Activated B cell treated with CpG ODN at 0.5 μM for 24 hours (primary cell): ENCODE measurements at regions of chr17 and their contacts with region 1.

Region 1: GRCh38 chr17:40559954-40560591 is 5.2 kb downstream of the CCR7 start:
- DNase-seq: peak; percentile 71
- ATAC-seq: peak; percentile 25
- H3K4me3 Mint-ChIP-seq: peak overlapping the region; percentile 89
- H3K27ac Mint-ChIP-seq: peak overlapping the region; percentile 99
- H3K4me1 Mint-ChIP-seq: peaks cover 81% of the 10 kb centered on the region
- H3K27me3 Mint-ChIP-seq: no peaks in the 10 kb centered on the region
- CTCF ChIP-seq: peak; percentile 74

Region 2: DNA sequence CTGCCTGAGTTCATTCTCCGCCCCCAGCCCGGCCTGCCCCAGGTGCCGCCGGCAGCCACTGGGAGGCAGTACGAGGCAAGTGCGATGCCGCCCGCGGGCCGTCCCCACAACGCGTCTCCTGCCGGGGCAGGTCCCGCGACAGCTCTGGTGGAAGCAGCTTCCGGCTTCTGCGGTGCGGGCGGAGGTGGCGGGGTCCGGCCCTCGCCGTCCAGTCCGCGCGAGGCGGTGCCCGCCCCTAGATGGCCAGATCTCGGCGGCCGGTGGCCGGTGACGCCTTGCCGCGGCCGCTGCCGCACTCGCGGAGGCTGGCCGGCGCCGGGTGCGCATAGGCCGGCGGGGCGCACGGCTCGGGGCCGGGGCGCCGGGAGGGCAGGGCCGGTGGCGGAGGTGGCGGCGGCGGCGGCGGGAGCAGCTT is 197.4 kb before region 1 on chr17:
- CTCF ChIA-PET with region 1: interaction called, 4 read pairs
- POLR2A ChIA-PET with region 1: interaction called, 5 read pairs
- intact Hi-C with region 1: loop called (anchors 1 kb)
- DNase-seq: peak; percentile 73
- ATAC-seq: peak; percentile 85
- H3K4me3 Mint-ChIP-seq: peak overlapping the region; percentile 58
- H3K27ac Mint-ChIP-seq: peak overlapping the region; percentile 67
- H3K4me1 Mint-ChIP-seq: peaks cover 17% of the 10 kb centered on the region
- H3K27me3 Mint-ChIP-seq: peaks cover 14% of the 10 kb centered on the region
- CTCF ChIP-seq: no peak

Region 3: DNA sequence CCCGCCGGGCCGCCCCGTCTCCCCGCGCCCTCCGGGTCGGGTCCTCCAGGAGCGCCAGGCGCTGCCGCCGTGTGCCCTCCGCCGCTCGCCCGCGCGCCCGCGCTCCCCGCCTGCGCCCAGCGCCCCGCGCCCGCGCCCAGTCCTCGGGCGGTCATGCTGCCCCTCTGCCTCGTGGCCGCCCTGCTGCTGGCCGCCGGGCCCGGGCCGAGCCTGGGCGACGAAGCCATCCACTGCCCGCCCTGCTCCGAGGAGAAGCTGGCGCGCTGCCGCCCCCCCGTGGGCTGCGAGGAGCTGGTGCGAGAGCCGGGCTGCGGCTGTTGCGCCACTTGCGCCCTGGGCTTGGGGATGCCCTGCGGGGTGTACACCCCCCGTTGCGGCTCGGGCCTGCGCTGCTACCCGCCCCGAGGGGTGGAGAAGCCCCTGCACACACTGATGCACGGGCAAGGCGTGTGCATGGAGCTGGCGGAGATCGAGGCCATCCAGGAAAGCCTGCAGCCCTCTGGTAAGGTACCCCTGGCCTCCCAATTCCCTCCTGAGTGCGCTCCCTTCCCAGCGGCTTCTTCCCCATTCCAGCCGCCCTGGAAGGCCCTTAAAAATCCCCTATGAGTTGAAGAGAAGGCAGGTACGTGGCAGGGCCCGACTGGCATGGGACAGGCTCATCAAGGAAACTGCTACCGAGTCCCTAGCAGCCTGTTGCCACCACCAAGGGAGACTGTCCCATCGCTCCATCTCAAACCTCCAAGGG is 116.3 kb before region 1 on chr17:
- CTCF ChIA-PET with region 1: interaction called, 8 read pairs
- POLR2A ChIA-PET with region 1: interaction called, 58 read pairs
- intact Hi-C with region 1: loop called (anchors 1 kb)
- DNase-seq: peak; percentile 72
- ATAC-seq: peak; percentile 83
- H3K4me3 Mint-ChIP-seq: peak overlapping the region; percentile 81
- H3K27ac Mint-ChIP-seq: peak overlapping the region; percentile 79
- H3K4me1 Mint-ChIP-seq: peaks cover 37% of the 10 kb centered on the region
- H3K27me3 Mint-ChIP-seq: no peaks in the 10 kb centered on the region
- CTCF ChIP-seq: no peak

Region 4: DNA sequence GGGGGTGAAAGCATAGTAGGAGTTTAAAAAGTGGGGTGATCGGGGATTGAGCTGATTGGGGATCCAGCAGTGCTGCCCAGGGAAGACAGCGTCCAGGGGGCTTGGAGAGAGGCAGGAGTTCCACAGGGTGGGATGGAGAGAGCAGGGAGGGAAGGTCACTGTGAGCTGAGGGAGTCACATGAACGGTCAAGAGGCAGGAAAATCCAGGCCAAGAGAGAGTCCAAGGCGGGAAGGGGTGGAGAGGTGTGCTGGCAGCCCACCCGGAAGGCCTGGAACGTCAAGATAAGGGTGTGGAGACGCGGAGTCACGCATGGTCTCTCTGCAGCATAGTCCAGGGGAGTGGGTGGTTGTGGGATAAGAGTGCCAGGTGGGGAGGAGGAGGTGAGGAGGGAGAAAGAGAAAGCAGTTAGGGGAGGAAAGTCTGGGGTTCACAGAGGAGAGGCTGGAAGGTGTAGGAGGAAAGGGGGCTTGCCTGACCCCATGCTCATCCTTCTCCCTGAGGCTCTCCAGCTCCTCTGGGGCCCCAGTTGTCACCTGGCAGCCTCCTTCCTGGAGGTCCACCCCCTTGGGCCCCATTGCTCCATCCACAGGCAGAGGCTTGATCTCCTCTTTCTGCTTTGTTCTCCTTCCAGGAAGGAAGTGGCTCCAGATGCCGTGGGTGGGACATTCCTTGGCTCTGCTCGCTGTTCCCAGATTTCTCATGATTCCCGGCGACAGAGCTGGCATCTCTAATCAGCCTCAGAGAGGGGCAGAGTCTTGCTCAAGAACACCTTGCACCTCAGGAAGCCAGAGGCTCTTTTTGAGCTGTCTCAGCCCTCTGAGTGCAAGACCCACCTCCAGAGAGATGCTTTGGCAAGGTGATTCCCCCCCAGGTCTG is 23.5 kb before region 1 on chr17:
- CTCF ChIA-PET with region 1: interaction called, 112 read pairs
- POLR2A ChIA-PET with region 1: interaction called, 1,450 read pairs
- intact Hi-C with region 1: loop called (anchors 1 kb)
- DNase-seq: peak; percentile 15
- ATAC-seq: no peak
- H3K4me3 Mint-ChIP-seq: no peak overlapping the region
- H3K27ac Mint-ChIP-seq: peak overlapping the region; percentile 59
- H3K4me1 Mint-ChIP-seq: peaks cover 91% of the 10 kb centered on the region
- H3K27me3 Mint-ChIP-seq: no peaks in the 10 kb centered on the region
- CTCF ChIP-seq: no peak

Region 5: DNA sequence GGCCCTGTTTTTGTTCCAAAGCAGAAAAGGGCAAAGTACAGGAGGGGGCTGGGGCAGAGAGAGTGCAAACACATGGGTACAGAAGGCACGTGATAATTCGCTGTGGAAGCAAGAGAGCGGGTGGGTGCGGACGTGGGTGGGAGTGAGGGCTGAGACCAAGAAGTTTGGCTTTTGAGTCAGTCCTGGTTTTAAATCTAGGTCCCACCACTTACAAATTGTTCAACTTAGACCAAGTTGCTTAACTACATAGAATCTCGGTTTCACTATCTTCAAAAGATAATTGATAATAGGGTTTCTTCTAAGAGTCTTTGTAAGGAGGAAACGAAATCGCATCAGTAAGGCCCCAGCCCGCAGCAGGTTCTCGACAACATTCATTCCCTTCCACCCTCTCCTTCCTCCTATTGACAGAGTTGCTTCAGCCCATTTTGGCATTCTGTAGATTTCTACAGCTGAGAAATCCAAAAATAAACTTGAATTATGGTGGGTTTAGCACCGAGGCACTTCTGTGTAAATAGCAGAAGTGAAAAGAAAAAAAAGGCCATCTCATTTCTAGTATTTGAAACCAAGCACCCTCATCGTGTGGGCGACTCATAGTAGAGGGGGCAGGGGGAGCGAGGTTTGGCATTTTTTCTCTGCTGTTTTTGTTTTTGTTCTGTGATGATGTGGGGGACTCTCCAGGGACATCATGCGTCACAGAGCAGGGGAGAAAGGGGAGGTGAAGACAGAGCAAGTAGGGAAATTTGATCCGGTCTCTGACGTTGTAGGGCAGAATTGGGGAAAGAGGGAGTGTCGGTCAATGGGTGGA is 38.8 kb after region 1 on chr17:
- CTCF ChIA-PET with region 1: interaction called, 15 read pairs
- POLR2A ChIA-PET with region 1: interaction called, 381 read pairs
- intact Hi-C with region 1: loop called (anchors 1 kb)
- DNase-seq: peak; percentile 70
- ATAC-seq: peak; percentile 75
- H3K4me3 Mint-ChIP-seq: peak overlapping the region; percentile 59
- H3K27ac Mint-ChIP-seq: peak overlapping the region; percentile 92
- H3K4me1 Mint-ChIP-seq: peaks cover 95% of the 10 kb centered on the region
- H3K27me3 Mint-ChIP-seq: no peaks in the 10 kb centered on the region
- CTCF ChIP-seq: no peak

Region 6: GRCh38 chr17:40647624-40648383 is 87.7 kb after region 1 on chr17 and contains the start of gene SMARCE1:
- CTCF ChIA-PET with region 1: interaction called, 3 read pairs
- POLR2A ChIA-PET with region 1: interaction called, 40 read pairs
- intact Hi-C with region 1: no loop called
- DNase-seq: peak; percentile 75
- ATAC-seq: peak; percentile 84
- H3K4me3 Mint-ChIP-seq: peak within 1 kb of the TSS; percentile 98
- H3K27ac Mint-ChIP-seq: peak within 1 kb of the TSS; percentile 99
- H3K4me1 Mint-ChIP-seq: peaks cover 48% of the 10 kb centered on the region
- H3K27me3 Mint-ChIP-seq: no peaks in the 10 kb centered on the region
- CTCF ChIP-seq: no peak
- total RNA-seq, gene SMARCE1: 140 TPM in 2 replicates

Region 7: DNA sequence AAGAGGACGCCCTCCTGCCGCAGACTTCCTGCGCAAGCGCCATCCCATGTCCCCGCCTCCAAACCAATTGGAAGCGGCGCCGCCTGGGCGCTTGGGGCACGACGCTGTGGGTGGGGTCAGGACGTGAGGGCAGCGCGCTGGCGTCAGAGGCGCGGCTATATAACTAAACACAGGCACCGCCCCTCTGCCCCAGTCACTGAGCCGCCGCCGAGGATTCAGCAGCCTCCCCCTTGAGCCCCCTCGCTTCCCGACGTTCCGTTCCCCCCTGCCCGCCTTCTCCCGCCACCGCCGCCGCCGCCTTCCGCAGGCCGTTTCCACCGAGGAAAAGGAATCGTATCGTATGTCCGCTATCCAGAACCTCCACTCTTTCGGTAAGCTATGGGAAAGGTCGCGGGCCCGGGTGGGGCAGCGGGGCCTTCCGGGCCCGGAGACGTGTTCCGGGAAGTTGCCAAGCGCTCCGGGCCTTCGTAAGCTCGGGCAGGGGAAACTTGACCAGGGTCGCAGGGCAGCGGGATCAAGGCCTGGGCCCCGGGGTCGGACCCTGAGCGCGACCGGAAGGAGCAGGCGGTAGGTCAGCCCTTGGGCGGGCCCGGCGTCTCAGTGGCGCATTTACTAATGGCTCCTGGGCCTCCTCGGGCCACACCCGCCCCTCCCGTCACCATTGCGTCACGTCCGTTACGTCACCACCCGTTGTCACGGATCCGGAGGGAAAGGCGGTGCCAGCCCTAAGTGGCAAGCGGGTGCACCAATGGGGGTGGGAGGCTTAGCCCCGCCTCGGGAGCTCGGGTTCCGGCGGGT is 1128.8 kb after region 1 on chr17 and contains the start of gene EIF1:
- CTCF ChIA-PET with region 1: no interaction called
- POLR2A ChIA-PET with region 1: interaction called, 33 read pairs
- intact Hi-C with region 1: loop called (anchors 2 kb)
- DNase-seq: peak; percentile 100
- ATAC-seq: peak; percentile 78
- H3K4me3 Mint-ChIP-seq: peak within 1 kb of the TSS; percentile 95
- H3K27ac Mint-ChIP-seq: peak within 1 kb of the TSS; percentile 99
- H3K4me1 Mint-ChIP-seq: peaks cover 39% of the 10 kb centered on the region
- H3K27me3 Mint-ChIP-seq: no peaks in the 10 kb centered on the region
- CTCF ChIP-seq: no peak
- total RNA-seq, gene EIF1: 843 and 900 TPM in 2 replicates